ENCODE measurements at regions of chr20 and their contacts with region 1.

Region 1: GRCh38 chr20:13800728-13801134 is 15.9 kb downstream of the NDUFAF5 start:
- DNase-seq: peak; percentile 41
- H3K4me3 ChIP-seq: no peak overlapping the region
- H3K27me3 ChIP-seq: no peaks in the 10 kb centered on the region
- CTCF ChIP-seq: no peak

Region 2: DNA sequence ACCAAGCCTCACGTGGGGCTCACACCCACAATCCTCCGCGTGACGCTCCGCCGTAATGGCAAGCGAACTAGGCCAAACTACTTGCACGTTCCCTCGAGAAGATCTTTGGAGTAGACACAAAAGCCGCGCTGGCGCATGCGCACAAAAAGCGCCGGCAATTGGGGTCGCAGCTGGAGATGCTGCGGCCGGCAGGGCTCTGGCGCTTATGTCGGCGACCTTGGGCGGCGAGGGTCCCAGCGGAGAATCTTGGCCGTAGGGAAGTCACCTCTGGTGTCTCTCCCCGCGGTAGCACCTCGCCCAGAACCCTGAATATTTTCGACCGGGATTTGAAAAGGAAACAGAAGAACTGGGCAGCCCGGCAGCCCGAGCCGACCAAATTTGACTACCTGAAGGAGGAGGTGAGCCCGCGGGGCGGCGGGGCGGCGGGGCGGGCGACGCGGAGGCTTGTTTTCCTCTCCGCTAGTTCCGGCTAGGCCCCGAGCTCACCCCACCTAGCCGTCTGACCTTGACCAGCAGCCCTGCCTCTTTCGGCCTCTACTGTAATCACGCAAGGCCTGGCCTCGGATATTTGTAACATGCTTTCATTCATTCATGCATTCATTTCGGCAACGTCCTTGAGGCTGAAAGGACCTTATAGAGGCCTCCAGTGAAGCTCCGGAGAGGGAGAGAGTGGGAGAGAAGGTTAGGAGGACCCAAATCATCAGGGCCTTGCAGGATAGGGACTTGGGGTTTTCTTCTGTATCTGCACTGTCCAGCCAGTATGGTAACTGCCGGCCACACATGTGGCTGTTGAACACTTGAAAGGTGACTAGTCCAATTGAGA is 15.6 kb before region 1 on chr20 and contains the starts of genes ESF1 and NDUFAF5:
- CTCF ChIA-PET with region 1: interaction called, 10 read pairs
- POLR2A ChIA-PET with region 1: no interaction called
- DNase-seq: peak; percentile 85
- H3K4me3 ChIP-seq: peak within 1 kb of the TSS; percentile 85
- H3K27me3 ChIP-seq: no peaks in the 10 kb centered on the region
- CTCF ChIP-seq: no peak
- polyA plus RNA-seq, gene ESF1: 0.76 and 2.8 TPM in 2 replicates
- polyA plus RNA-seq, gene NDUFAF5: 6.3 and 16.1 TPM in 2 replicates

Region 3: GRCh38 chr20:13852306-13852705 is 51.6 kb after region 1 on chr20:
- CTCF ChIA-PET with region 1: no interaction called
- POLR2A ChIA-PET with region 1: no interaction called
- DNase-seq: peak; percentile 95
- H3K4me3 ChIP-seq: no peak overlapping the region
- H3K27me3 ChIP-seq: no peaks in the 10 kb centered on the region
- CTCF ChIP-seq: no peak

Region 4: GRCh38 chr20:14030991-14031390 is 230.3 kb after region 1 on chr20:
- CTCF ChIA-PET with region 1: no interaction called
- POLR2A ChIA-PET with region 1: interaction called, 10 read pairs
- DNase-seq: no peak
- H3K4me3 ChIP-seq: no peak overlapping the region
- H3K27me3 ChIP-seq: no peaks in the 10 kb centered on the region
- CTCF ChIP-seq: no peak

Measured in BJ (cell line).